Lower leg skin (tissue), 4 donors: ENCODE measurements at regions of chr5 and their contacts with region 1.

Region 1: DNA sequence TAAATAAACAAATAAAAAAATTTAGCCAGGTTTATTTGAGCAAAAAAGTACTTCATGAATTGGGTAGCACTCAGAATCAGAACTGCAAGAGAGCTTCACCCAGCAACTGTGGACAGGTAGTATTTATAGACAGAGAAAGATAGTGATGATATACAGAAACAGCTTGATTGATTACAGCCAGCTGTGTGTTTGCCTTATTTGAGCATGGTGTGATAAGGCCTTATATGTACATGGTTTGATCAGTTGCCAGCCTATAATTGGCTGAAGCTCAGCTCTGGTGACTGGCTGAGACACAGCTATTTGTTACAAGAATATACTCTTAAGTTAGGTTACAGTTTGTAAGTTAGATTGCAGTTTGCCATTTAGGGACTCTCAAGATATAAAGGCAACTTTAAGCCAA is 34.3 kb upstream of the ARL15 start:
- DNase-seq: no peak
- H3K4me3 ChIP-seq: no peak overlapping the region
- CTCF ChIP-seq: no peak
- POLR2A ChIP-seq: no peak

Region 2: GRCh38 chr5:54309691-54310432 is 34.8 kb before region 1 on chr5:
- intact Hi-C with region 1: no loop called
- DNase-seq: peak in 1 of 2 donors; percentile 90
- H3K4me3 ChIP-seq: peak overlapping the region; percentile 97
- CTCF ChIP-seq: no peak
- POLR2A ChIP-seq: no peak

Region 3: GRCh38 chr5:55771175-55771655 is 1426.6 kb after region 1 on chr5:
- intact Hi-C with region 1: loop called (anchors 5 kb)
- DNase-seq: no peak
- H3K4me3 ChIP-seq: no peak overlapping the region
- CTCF ChIP-seq: no peak
- POLR2A ChIP-seq: no peak